ENCODE measurements at regions of chrX and their contacts with region 1.

Region 1: DNA sequence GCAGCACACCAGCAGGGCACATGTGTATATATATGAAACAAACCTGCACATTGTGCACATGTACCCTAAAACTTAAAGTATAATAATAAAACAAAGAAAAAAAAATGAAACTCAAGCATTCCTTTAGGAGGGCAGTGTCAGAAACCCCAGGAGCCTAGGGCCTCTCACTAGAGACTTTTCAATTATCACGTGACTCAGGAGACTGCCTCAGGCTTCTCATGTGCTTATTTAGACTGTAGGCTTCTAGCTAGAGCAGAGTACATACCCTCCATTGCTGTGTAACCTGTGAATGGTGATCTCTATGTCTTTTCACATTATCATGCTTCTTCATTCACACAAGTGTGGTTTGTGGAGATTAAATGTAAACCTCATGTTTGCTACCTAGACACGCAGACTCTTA is 48.2 kb upstream of the MAGEH1 start:
- DNase-seq: no peak
- ATAC-seq: no peak
- H3K4me3 ChIP-seq: no peak overlapping the region
- H3K27ac ChIP-seq: no peak overlapping the region
- H3K4me1 ChIP-seq: no peaks in the 10 kb centered on the region
- H3K27me3 ChIP-seq: no peaks in the 10 kb centered on the region
- CTCF ChIP-seq: no peak
- POLR2A ChIP-seq: no peak

Region 2: GRCh38 chrX:55142206-55142918 is 261.3 kb before region 1 on chrX:
- in situ Hi-C with region 1: no loop called
- intact Hi-C with region 1: no loop called
- DNase-seq: no peak
- ATAC-seq: no peak
- H3K4me3 ChIP-seq: no peak overlapping the region
- H3K27ac ChIP-seq: no peak overlapping the region
- H3K4me1 ChIP-seq: no peaks in the 10 kb centered on the region
- H3K27me3 ChIP-seq: no peaks in the 10 kb centered on the region
- CTCF ChIP-seq: no peak
- POLR2A ChIP-seq: no peak

Region 3: GRCh38 chrX:55312655-55313054 is 91.0 kb before region 1 on chrX:
- in situ Hi-C with region 1: loop called in 1 of 4 experiments (anchors 25 kb)
- intact Hi-C with region 1: no loop called
- DNase-seq: no peak
- ATAC-seq: no peak
- H3K4me3 ChIP-seq: no peak overlapping the region
- H3K27ac ChIP-seq: no peak overlapping the region
- H3K4me1 ChIP-seq: no peaks in the 10 kb centered on the region
- H3K27me3 ChIP-seq: no peaks in the 10 kb centered on the region
- CTCF ChIP-seq: no peak
- POLR2A ChIP-seq: no peak

Region 4: GRCh38 chrX:55907968-55908607 is 504.4 kb after region 1 on chrX:
- in situ Hi-C with region 1: no loop called
- intact Hi-C with region 1: no loop called
- DNase-seq: no peak
- ATAC-seq: no peak
- H3K4me3 ChIP-seq: peak overlapping the region; percentile 54 to 67 (median 62)
- H3K27ac ChIP-seq: peak overlapping the region in 3 of 4 donors; percentile 26 to 51 (median 33)
- H3K4me1 ChIP-seq: no peaks in the 10 kb centered on the region
- H3K27me3 ChIP-seq: no peaks in the 10 kb centered on the region
- CTCF ChIP-seq: peak in 2 of 5 experiments; percentile 28 to 39
- POLR2A ChIP-seq: no peak